ENCODE measurements at regions of chr2 and their contacts with region 1.

Region 1: GRCh38 chr2:173021939-173022371 is 53.7 kb upstream of the MAP3K20 start:
- DNase-seq: peak; percentile 90
- ATAC-seq: peak; percentile 94
- H3K4me3 ChIP-seq: no peak overlapping the region
- H3K27ac ChIP-seq: no peak overlapping the region
- H3K4me1 ChIP-seq: peaks cover 6% of the 10 kb centered on the region
- H3K27me3 ChIP-seq: no peaks in the 10 kb centered on the region
- CTCF ChIP-seq: peak; percentile 83

Region 2: GRCh38 chr2:172806493-172806892 is 215.5 kb before region 1 on chr2:
- CTCF ChIA-PET with region 1: no interaction called
- POLR2A ChIA-PET with region 1: no interaction called
- intact Hi-C with region 1: loop called (anchors 1 kb)
- DNase-seq: peak; percentile 70
- ATAC-seq: peak; percentile 64; the same call in 1 of the 2 replicates
- H3K4me3 ChIP-seq: no peak overlapping the region
- H3K27ac ChIP-seq: no peak overlapping the region
- H3K4me1 ChIP-seq: no peaks in the 10 kb centered on the region
- H3K27me3 ChIP-seq: no peaks in the 10 kb centered on the region
- CTCF ChIP-seq: peak; percentile 93

Region 3: DNA sequence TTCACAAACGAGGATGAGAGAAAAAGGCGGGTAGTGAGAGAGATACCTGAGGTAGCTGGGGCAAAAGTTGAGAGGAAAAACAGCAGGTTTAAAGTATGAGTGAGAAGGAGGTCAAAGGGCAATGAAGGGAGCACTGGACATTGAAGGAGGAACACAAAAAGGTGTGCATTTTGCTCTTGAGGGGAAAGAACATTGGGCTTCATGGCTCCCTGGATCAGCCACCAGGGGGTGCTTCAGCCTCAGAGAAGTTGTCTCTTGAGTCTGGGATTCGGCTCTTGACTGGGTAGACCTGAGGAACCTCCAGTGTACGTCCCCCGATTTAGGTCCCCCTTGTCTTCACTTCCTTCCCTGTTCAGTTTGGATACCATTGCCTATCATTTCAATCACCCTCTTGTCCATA is 157.8 kb before region 1 on chr2:
- CTCF ChIA-PET with region 1: no interaction called
- POLR2A ChIA-PET with region 1: no interaction called
- intact Hi-C with region 1: loop called (anchors 1 kb)
- DNase-seq: peak; percentile 72
- ATAC-seq: peak; percentile 55
- H3K4me3 ChIP-seq: no peak overlapping the region
- H3K27ac ChIP-seq: no peak overlapping the region
- H3K4me1 ChIP-seq: peaks cover 14% of the 10 kb centered on the region
- H3K27me3 ChIP-seq: no peaks in the 10 kb centered on the region
- CTCF ChIP-seq: peak; percentile 83

Region 4: GRCh38 chr2:172972005-172972619 is 49.8 kb before region 1 on chr2:
- CTCF ChIA-PET with region 1: interaction called, 3 read pairs
- POLR2A ChIA-PET with region 1: no interaction called
- intact Hi-C with region 1: loop called (anchors 1 kb)
- DNase-seq: peak; percentile 60
- ATAC-seq: peak; percentile 58
- H3K4me3 ChIP-seq: no peak overlapping the region
- H3K27ac ChIP-seq: no peak overlapping the region
- H3K4me1 ChIP-seq: peaks cover 34% of the 10 kb centered on the region
- H3K27me3 ChIP-seq: no peaks in the 10 kb centered on the region
- CTCF ChIP-seq: peak; percentile 91

Region 5: GRCh38 chr2:173343906-173344305 is 322.0 kb after region 1 on chr2:
- CTCF ChIA-PET with region 1: no interaction called
- POLR2A ChIA-PET with region 1: no interaction called
- intact Hi-C with region 1: no loop called
- DNase-seq: no peak
- ATAC-seq: no peak
- H3K4me3 ChIP-seq: no peak overlapping the region
- H3K27ac ChIP-seq: no peak overlapping the region
- H3K4me1 ChIP-seq: no peaks in the 10 kb centered on the region
- H3K27me3 ChIP-seq: no peaks in the 10 kb centered on the region
- CTCF ChIP-seq: no peak

Measured in PC-3 (cell line).